Breast epithelium (tissue), 4 donors: ENCODE measurements at regions of chr6 and their contacts with region 1.

Region 1: DNA sequence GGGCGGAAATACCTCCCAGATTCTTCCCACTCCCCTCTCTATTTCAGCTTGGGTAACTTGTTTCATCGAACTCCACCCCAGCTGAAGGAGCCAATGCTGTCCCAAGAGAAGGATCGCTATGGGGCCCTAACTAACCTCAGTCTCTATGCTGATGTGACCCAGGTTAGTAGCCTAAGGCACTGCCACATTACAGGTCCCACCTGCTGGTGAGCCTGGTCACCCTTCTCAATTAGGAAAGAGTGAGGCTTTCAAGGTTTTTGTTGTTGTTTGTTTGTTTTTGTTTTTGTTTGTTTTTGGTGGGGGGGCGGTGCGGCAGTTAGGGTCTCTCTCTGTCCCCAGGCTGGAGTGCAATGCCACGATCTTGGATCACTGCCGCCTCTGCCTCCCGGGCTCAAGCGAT is 168.4 kb downstream of the OR2B2 start:
- DNase-seq: no peak
- H3K4me3 ChIP-seq: no peak overlapping the region
- H3K27ac ChIP-seq: no peak overlapping the region
- H3K4me1 ChIP-seq: no peaks in the 10 kb centered on the region
- H3K27me3 ChIP-seq: peaks cover 0 to 9% of the 10 kb centered on the region in 2 donors
- CTCF ChIP-seq: no peak
- POLR2A ChIP-seq: no peak

Region 2: DNA sequence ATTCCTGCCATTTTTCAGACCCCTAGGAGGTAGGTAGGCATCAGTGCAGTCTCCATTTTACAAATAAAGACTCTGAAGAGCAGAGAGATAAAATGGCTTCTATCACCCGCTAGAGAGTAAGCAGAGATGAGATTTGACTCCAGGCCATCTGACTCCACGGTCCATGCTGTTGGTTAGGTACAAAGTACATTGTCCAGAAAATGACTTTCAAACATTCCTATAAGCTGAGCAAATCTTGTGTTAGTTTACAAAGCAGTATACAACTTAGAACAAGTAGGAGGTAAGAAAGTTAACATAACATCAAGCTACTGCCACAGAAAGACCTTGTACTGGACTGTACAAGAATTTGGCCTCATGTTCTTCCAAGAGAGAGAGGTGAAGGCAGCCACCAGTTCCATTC is 1228.8 kb before region 1 on chr6:
- intact Hi-C with region 1: loop called (anchors 5 kb)
- DNase-seq: no peak
- H3K4me3 ChIP-seq: no peak overlapping the region
- H3K27ac ChIP-seq: no peak overlapping the region
- H3K4me1 ChIP-seq: no peaks in the 10 kb centered on the region
- H3K27me3 ChIP-seq: no peaks in the 10 kb centered on the region
- CTCF ChIP-seq: no peak
- POLR2A ChIP-seq: no peak

Region 3: DNA sequence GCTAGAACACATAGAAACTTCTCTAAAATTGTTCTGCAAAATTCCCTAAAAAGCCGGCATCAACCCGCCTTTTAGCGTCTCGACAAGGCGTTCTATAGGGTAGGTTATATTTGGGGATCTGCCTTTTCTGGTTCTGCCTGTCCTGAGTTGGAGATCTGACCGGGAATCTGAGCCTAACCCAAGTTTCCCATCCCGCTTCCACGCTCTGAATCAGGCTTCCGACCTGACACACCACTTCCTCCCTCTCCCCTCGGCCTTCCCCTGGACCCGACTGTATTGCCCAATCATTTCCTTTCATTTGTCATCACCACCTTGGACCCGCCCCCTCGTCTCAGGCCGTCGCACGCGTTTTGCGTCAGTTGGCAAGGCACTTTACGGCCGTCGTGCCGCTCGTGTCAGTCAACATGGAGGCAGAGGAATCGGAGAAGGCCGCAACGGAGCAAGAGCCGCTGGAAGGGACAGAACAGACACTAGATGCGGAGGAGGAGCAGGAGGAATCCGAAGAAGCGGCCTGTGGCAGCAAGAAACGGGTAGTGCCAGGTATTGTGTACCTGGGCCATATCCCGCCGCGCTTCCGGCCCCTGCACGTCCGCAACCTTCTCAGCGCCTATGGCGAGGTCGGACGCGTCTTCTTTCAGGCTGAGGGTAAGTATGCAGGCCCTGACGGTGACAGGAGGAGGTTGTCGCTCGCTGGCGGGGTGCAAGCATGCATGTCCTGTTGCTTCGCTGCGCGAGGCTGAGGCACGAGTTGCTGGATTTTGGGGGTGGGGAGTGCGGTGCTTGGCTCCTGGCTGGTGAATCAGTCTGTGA is 1147.0 kb before region 1 on chr6 and contains the start of gene ABT1:
- intact Hi-C with region 1: loop called (anchors 5 kb)
- DNase-seq: peak; percentile 98
- H3K4me3 ChIP-seq: peak within 1 kb of the TSS; percentile 89 to 96 (median 94)
- H3K27ac ChIP-seq: peak within 1 kb of the TSS; percentile 88 to 90
- H3K4me1 ChIP-seq: peaks cover 6 to 8% of the 10 kb centered on the region in 2 donors
- H3K27me3 ChIP-seq: peaks cover 0 to 24% of the 10 kb centered on the region in 2 donors
- CTCF ChIP-seq: no peak
- POLR2A ChIP-seq: peak; percentile 77
- total RNA-seq, gene ABT1: 13.8 to 19.5 (median 18.0) TPM

Region 4: DNA sequence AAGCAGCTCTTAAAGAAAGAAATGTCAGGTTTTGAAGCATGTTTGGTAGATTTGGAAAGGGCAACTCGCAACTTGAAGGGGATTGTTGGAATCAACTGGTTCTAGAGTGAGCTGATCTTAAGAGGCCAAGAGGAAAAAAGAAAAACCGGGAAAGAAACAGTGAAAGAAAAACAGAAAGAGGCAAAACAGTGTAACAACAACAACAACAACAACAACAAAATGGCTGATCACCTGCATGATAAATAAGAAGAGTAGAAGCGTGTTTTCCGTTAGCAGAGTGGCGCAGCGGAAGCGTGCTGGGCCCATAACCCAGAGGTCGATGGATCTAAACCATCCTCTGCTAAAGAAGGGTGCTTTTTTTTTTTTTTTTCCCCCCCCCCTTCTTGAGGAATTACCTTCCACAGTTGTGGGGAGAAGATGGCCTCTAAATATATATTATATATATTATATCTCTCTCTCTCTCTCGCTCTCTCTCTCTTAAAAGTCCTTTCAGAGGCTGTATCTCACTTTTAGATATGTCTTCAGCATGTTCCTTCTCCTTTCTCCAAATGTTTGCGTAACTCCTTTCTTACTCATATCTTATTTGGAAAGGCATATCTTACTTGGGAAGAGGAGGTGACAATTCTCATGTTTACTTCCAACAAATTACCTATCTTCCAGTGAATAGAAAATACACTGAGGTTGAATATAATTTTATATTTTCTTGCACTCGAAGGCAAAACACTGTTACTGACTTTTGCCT is 34.0 kb after region 1 on chr6:
- intact Hi-C with region 1: no loop called
- DNase-seq: no peak
- H3K4me3 ChIP-seq: no peak overlapping the region
- H3K27ac ChIP-seq: no peak overlapping the region
- H3K4me1 ChIP-seq: no peaks in the 10 kb centered on the region
- H3K27me3 ChIP-seq: peaks cover 0 to 16% of the 10 kb centered on the region in 2 donors
- CTCF ChIP-seq: no peak
- POLR2A ChIP-seq: no peak

Region 5: GRCh38 chr6:28188111-28188979 is 444.5 kb after region 1 on chr6:
- intact Hi-C with region 1: no loop called
- DNase-seq: no peak
- H3K4me3 ChIP-seq: no peak overlapping the region
- H3K27ac ChIP-seq: no peak overlapping the region
- H3K4me1 ChIP-seq: no peaks in the 10 kb centered on the region
- H3K27me3 ChIP-seq: no peaks in the 10 kb centered on the region
- CTCF ChIP-seq: no peak
- POLR2A ChIP-seq: no peak